K562 (cell line): ENCODE measurements at regions of chr11 and their contacts with region 1.

Region 1: DNA sequence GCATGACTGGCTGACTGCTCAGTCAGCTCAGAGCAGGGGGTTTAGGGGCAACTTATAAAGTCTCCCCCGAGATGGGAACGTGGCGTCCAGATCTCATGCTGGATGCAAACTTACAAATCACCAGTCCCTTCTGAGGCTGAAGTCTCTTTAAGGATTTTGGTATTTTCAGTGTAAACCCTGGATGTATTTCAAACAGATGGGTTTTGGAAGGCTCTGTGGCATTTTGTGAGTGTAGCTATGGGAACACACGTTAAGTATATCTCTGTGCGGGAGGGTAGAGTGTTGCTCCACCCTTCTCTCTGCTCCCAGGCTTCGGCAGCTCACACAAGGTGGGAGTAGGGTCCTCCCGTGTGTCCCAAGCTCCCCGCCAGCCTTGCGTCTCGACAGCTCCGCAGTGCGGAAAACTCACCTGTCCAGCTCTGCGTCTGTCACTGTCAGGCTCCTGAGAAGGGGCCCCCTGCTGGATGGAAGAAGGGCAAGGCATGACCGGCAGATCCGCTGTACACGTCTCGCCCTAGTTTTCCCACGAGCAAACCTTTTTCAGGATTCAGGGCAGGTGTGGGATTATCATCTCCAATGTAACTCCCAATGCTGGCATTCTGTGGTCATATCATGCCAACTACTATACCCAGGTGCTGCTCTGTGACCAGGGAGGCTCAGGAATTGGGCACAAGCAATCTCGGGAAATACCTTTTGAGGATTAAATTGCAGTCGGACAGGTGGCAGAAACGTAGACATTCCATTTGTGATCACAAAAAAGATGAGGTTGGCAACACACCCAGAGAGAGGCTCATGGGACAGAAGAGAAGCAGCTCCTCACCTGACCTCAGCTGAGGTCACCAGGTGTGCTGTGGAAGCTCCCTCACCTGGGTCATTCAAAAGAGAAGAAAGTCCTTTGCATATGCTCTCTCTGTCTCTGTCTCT is 313.9 kb upstream of the B3GAT1 start:
- DNase-seq: peak; percentile 48 to 55 (median 54)
- ATAC-seq: peak; percentile 91
- H3K4me3 ChIP-seq: no peak overlapping the region
- H3K27ac ChIP-seq: no peak overlapping the region
- H3K4me1 ChIP-seq: no peaks in the 10 kb centered on the region
- H3K27me3 ChIP-seq: peaks cover 0 to 34% of the 10 kb centered on the region in 2 experiments; a peak in 3 of 5 replicates
- CTCF ChIP-seq: peak; percentile 51 to 64 (median 60)
- EP300 ChIP-seq: no peak
- POLR2A ChIP-seq: no peak
- RAD21 ChIP-seq: peak in 1 of 2 experiments; percentile 44; a peak in 2 of 4 replicates

Region 2: GRCh38 chr11:134360050-134360835 is 365.7 kb before region 1 on chr11:
- CTCF ChIA-PET with region 1: no interaction called
- POLR2A ChIA-PET with region 1: no interaction called
- in situ Hi-C with region 1: no loop called
- intact Hi-C with region 1: loop called (anchors 2 kb)
- DNase-seq: peak; percentile 87 to 89 (median 88)
- ATAC-seq: peak; percentile 99
- H3K4me3 ChIP-seq: no peak overlapping the region
- H3K27ac ChIP-seq: no peak overlapping the region
- H3K4me1 ChIP-seq: peaks cover 10 to 21% of the 10 kb centered on the region in 2 experiments; a peak in 4 of 5 replicates
- H3K27me3 ChIP-seq: no peaks in the 10 kb centered on the region
- CTCF ChIP-seq: peak; percentile 90 to 95 (median 93)
- EP300 ChIP-seq: no peak
- POLR2A ChIP-seq: no peak
- RAD21 ChIP-seq: peak; percentile 93 to 94

Region 3: DNA sequence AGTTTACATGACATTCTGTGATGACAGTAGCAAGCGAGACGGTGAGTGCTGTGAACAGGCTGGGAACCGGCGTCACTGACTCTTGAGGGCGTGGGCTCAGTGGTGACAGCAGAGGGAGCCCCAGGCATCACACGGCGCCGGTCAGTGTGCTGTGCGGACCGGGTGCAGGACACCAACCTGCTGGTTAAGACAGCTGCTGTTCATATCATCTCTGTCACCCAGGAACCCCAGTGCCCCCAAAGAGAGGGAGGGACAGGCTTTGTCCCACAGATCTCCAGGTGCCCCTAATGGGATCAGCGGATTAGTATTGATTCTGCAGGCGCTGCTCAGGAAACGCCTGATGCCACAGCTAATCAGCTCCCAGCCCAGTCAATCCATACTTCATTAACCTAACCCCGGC is 332.3 kb before region 1 on chr11:
- CTCF ChIA-PET with region 1: no interaction called
- POLR2A ChIA-PET with region 1: no interaction called
- in situ Hi-C with region 1: no loop called
- intact Hi-C with region 1: loop called (anchors 10 kb)
- DNase-seq: peak; percentile 51 to 74 (median 58)
- ATAC-seq: peak; percentile 96
- H3K4me3 ChIP-seq: no peak overlapping the region
- H3K27ac ChIP-seq: no peak overlapping the region
- H3K4me1 ChIP-seq: no peaks in the 10 kb centered on the region
- H3K27me3 ChIP-seq: peaks cover 6 to 76% of the 10 kb centered on the region in 2 experiments
- CTCF ChIP-seq: peak; percentile 52 to 58 (median 56)
- EP300 ChIP-seq: no peak
- POLR2A ChIP-seq: no peak
- RAD21 ChIP-seq: peak; percentile 35 to 70

Region 4: DNA sequence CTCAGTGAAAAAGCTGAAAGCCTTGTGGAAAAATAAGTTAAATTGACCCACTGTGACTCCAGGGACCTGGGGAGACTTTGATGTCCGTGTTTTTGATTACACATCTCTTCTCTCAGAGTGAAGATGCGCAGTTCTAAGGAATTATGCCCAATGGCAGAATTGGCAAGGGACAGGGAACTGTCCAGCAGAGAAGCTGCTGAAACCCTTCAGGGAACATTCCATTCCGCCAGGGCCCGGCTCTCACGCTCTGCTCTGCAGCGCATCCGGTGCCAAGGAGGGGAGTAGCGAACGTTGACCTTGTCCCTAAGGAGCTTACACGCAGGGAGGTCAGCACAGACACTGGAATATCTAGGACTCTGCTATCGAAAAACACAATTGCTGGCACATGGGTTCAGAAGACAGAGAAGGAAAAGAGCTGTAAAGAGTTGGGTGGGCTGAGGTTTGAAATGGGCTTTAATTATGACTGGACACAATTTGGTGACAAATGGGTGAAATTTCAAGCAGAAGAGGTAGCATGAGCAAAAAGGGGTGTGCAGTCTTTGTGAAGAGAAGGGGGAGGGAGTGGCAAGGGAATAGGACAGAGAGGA is 249.4 kb before region 1 on chr11:
- CTCF ChIA-PET with region 1: no interaction called
- POLR2A ChIA-PET with region 1: no interaction called
- in situ Hi-C with region 1: no loop called
- intact Hi-C with region 1: no loop called
- DNase-seq: peak in 1 of 4 experiments; percentile 9
- ATAC-seq: peak; percentile 49; the same call in 2 of the 3 replicates
- H3K4me3 ChIP-seq: no peak overlapping the region
- H3K27ac ChIP-seq: no peak overlapping the region
- H3K4me1 ChIP-seq: no peaks in the 10 kb centered on the region
- H3K27me3 ChIP-seq: peaks cover 7 to 49% of the 10 kb centered on the region in 2 experiments; a peak in 4 of 5 replicates
- CTCF ChIP-seq: no peak
- EP300 ChIP-seq: no peak
- POLR2A ChIP-seq: no peak
- RAD21 ChIP-seq: no peak

Region 5: GRCh38 chr11:134592391-134592990 is 133.5 kb before region 1 on chr11:
- CTCF ChIA-PET with region 1: no interaction called
- POLR2A ChIA-PET with region 1: no interaction called
- in situ Hi-C with region 1: no loop called
- intact Hi-C with region 1: loop called (anchors 5 kb)
- DNase-seq: peak; percentile 38 to 62 (median 42)
- ATAC-seq: peak; percentile 90
- H3K4me3 ChIP-seq: no peak overlapping the region
- H3K27ac ChIP-seq: no peak overlapping the region
- H3K4me1 ChIP-seq: no peaks in the 10 kb centered on the region
- H3K27me3 ChIP-seq: no peaks in the 10 kb centered on the region; a peak in 1 of 5 replicates
- CTCF ChIP-seq: peak; percentile 58 to 68 (median 65)
- EP300 ChIP-seq: no peak
- POLR2A ChIP-seq: no peak
- RAD21 ChIP-seq: peak in 1 of 2 experiments; percentile 58; a peak in 3 of 4 replicates

Region 6: GRCh38 chr11:134742224-134742612 is 16.2 kb after region 1 on chr11:
- CTCF ChIA-PET with region 1: no interaction called
- POLR2A ChIA-PET with region 1: no interaction called
- in situ Hi-C with region 1: no loop called
- intact Hi-C with region 1: no loop called
- DNase-seq: no peak
- ATAC-seq: no peak
- H3K4me3 ChIP-seq: no peak overlapping the region
- H3K27ac ChIP-seq: no peak overlapping the region
- H3K4me1 ChIP-seq: no peaks in the 10 kb centered on the region
- H3K27me3 ChIP-seq: peaks cover 0 to 11% of the 10 kb centered on the region in 2 experiments; a peak in 3 of 5 replicates
- CTCF ChIP-seq: no peak
- EP300 ChIP-seq: no peak
- POLR2A ChIP-seq: no peak
- RAD21 ChIP-seq: no peak